AG04450 (cell line): ENCODE measurements at regions of chr1 and their contacts with region 1.

Region 1: GRCh38 chr1:25204797-25205480 is 27.4 kb downstream of the SYF2 start:
- DNase-seq: no peak
- H3K4me3 ChIP-seq: no peak overlapping the region
- H3K27ac ChIP-seq: no peak overlapping the region
- H3K27me3 ChIP-seq: peaks cover 34% of the 10 kb centered on the region
- CTCF ChIP-seq: peak; percentile 78

Region 2: DNA sequence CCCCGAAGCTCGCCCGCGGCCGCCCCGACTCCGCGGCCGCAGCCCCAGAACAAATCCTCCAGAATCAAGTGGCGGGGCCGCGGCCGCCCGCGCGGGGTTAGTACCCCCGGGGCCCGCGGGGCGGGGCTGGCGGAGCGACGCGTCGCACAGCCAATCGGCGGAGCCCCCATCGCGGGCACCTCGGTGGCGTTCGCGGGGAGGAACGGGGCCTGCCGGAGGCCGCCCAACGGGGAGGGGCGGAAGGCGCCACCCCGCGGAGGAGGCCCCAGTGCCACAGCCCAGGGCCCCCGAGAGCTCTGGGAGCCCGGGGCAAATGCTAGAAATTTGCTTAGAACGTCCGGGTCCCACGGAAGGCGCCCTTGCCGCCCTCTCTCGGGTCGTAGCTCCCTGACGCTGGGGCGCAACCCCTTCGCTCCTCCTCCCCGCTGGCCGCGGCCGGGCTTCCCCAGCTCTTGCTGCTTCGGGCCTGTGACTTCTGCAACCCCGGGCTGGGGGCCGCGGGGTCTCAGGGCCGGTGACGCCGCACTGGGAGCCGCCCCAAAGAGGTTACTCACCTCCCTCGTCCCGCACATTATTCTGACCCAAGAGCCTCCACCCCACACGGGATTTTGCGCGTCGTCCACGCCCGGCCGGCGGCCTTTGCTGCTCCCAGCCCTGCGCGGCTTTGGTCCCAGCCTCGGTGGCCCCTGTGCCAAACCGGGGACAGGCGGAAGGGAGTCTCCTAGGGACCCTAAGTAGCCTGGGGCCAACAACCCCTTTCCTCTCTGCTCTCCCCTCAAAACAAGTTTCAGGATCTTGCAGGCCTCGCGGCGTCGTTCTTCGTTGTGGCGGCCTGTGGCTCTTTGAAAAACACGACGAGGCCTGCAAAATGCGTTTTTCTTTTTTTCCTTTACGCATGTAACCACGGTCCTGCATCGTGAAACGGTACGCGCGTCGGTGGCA is 274.5 kb before region 1 on chr1 and contains the start of gene RUNX3:
- CTCF ChIA-PET with region 1: interaction called, 25 read pairs
- POLR2A ChIA-PET with region 1: no interaction called
- DNase-seq: no peak
- H3K4me3 ChIP-seq: no peak within 1 kb of the TSS
- H3K27ac ChIP-seq: no peak within 1 kb of the TSS
- H3K27me3 ChIP-seq: peaks cover 90% of the 10 kb centered on the region
- CTCF ChIP-seq: no peak
- polyA plus RNA-seq, gene RUNX3: not detected in 2 replicates

Region 3: GRCh38 chr1:25037174-25038074 is 167.5 kb before region 1 on chr1:
- CTCF ChIA-PET with region 1: interaction called, 11 read pairs
- POLR2A ChIA-PET with region 1: no interaction called
- DNase-seq: no peak
- H3K4me3 ChIP-seq: no peak overlapping the region
- H3K27ac ChIP-seq: no peak overlapping the region
- H3K27me3 ChIP-seq: peaks cover 5% of the 10 kb centered on the region
- CTCF ChIP-seq: peak; percentile 68

Region 4: GRCh38 chr1:25117233-25117823 is 87.6 kb before region 1 on chr1:
- CTCF ChIA-PET with region 1: no interaction called
- POLR2A ChIA-PET with region 1: no interaction called
- DNase-seq: no peak
- H3K4me3 ChIP-seq: no peak overlapping the region
- H3K27ac ChIP-seq: no peak overlapping the region
- H3K27me3 ChIP-seq: peaks cover 28% of the 10 kb centered on the region
- CTCF ChIP-seq: no peak

Region 5: DNA sequence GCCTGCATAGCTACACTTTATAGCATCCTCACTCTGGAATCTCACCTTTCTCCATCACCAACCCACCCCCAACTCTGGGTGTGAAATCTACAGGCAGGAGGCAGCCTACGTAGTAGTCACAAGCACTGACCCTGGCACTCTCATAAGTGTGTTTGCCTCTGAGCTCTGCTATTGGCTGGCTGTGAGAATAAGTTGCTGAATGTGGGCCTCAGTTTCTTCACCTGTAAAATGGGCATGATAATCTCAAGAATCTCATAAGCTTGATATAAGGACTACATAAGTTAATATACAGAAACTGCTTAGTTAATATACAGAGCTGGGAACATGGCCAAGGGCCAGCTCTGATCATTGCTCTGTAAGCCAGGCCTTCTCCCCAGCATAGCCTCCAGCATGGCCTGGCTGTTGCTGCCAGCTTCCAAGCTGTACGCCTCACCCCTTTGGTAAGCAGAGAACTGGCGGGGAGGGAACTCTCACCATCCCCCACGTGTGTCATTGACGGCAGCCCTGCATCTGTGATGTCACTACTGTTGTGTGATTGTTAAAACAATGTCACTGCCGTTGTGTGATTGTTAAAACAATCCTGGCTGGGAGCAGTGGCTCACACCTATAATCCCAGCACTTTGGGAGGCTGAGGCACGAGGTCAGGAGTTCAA is 25.9 kb before region 1 on chr1:
- CTCF ChIA-PET with region 1: interaction called, 10 read pairs
- POLR2A ChIA-PET with region 1: no interaction called
- DNase-seq: no peak
- H3K4me3 ChIP-seq: no peak overlapping the region
- H3K27ac ChIP-seq: no peak overlapping the region
- H3K27me3 ChIP-seq: peaks cover 4% of the 10 kb centered on the region
- CTCF ChIP-seq: no peak

Region 6: DNA sequence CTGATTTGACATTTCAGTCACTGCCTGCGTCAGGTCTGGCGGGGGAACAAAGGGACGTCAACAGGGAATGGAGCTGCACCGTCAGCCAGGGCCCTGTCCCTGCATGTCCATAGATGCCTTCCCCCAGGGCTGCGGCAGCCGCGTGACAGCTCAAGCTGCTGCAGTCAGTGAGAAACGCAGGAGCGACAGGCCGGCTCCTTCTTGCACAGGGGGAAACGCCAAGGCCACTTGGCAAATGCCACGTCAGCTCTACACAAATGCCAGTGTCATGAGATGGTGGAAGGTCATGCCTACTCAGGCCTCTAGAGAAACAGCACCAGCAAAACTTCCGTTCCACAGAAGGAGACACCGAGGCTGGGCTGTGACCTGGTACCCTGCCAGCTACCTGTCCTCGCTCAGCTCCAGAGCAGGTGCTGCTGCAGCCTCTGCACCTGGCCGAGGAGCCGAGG is 10.3 kb before region 1 on chr1:
- CTCF ChIA-PET with region 1: interaction called, 17 read pairs
- POLR2A ChIA-PET with region 1: no interaction called
- DNase-seq: no peak
- H3K4me3 ChIP-seq: no peak overlapping the region
- H3K27ac ChIP-seq: no peak overlapping the region
- H3K27me3 ChIP-seq: peaks cover 46% of the 10 kb centered on the region
- CTCF ChIP-seq: no peak

Region 7: DNA sequence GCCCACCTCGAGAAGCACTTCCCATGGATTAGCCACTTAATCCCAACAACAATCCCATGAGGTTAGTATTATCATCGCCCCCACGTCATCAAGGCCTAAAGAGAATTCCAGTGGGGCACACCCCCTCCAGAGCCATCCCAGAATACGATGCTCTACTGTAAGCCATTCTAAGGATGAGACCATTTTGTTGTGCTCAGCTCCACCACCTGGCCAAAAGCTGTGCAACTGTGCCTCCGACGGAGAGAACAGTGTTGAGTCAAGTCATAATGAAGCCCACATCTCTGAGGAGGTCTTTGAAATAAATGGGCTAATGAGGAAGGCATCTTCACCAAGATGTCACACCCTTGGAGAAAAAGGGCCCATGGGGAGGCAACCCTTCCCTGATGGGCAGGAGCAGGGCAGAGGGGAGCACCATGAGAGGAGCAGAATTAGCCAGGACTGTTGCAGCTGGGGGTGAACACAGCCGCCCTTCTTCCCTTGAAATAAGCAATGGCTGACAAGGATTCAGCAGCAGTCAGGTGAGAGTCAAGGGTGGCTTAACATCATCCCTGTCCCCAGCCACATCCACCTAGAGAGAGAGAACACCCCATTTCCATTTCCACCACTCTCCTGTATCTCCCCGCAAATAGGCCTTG is 12.8 kb after region 1 on chr1:
- CTCF ChIA-PET with region 1: interaction called, 21 read pairs
- POLR2A ChIA-PET with region 1: interaction called, 8 read pairs
- DNase-seq: no peak
- H3K4me3 ChIP-seq: no peak overlapping the region
- H3K27ac ChIP-seq: no peak overlapping the region
- H3K27me3 ChIP-seq: no peaks in the 10 kb centered on the region
- CTCF ChIP-seq: no peak

Region 8: DNA sequence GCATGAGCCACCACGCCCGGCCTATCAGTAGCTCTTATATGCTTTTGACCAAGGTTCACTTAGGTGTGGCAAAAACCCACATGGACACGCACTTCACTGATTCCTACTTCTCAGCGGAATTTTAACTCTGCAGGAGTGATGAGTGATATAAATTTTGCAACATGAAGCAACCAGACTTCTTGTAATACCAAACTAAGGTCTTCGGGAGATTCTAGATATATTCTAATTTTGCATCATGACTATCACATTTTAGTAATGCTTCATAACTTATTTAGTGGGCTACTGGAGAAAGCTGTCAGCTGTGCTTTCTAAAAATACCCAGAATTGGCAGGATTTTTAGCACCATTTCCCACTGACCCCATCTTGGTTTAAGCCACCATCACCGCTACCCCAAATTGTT is 187.9 kb after region 1 on chr1:
- CTCF ChIA-PET with region 1: no interaction called
- POLR2A ChIA-PET with region 1: no interaction called
- DNase-seq: no peak
- H3K4me3 ChIP-seq: no peak overlapping the region
- H3K27ac ChIP-seq: no peak overlapping the region
- H3K27me3 ChIP-seq: no peaks in the 10 kb centered on the region
- CTCF ChIP-seq: no peak